IMR-90 (cell line): ENCODE measurements at regions of chr18 and their contacts with region 1.

Region 1: DNA sequence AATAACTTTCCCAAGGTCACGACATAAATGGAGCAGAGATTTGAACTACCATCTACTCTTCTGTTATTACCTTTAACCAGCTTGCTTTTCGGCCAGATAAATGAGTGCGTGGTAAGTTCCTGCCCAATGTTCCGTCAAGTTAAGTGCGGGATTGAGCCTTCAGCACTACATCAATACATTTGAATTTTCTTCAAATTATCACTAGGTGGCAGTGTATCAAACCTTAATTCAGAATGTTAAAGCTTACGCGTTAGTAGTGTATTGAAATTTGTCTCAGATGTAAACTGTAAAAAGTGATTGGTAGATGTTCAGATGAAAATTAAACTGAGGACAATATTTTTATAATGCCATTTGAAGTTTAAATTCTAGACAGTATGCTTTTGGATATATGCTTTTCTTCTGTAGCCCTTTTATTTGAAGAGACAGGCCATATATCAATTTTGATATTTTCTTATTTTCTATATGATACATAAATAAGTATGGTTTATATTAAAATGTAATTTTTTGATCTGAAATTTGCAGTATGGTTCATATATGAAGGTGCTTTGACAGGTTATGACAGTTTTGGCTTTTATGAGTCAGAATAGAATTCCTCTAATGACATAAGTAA is 681.3 kb downstream of the ADCYAP1 start:
- DNase-seq: peak; percentile 3
- ATAC-seq: no peak
- H3K4me3 ChIP-seq: no peak overlapping the region
- H3K27ac ChIP-seq: no peak overlapping the region
- H3K4me1 ChIP-seq: no peaks in the 10 kb centered on the region
- H3K27me3 ChIP-seq: no peaks in the 10 kb centered on the region
- CTCF ChIP-seq: peak; percentile 34
- POLR2A ChIP-seq: no peak
- RAD21 ChIP-seq: 0 out of 2 replicates have a peak, but pooled peaks have one; percentile 20

Region 2: DNA sequence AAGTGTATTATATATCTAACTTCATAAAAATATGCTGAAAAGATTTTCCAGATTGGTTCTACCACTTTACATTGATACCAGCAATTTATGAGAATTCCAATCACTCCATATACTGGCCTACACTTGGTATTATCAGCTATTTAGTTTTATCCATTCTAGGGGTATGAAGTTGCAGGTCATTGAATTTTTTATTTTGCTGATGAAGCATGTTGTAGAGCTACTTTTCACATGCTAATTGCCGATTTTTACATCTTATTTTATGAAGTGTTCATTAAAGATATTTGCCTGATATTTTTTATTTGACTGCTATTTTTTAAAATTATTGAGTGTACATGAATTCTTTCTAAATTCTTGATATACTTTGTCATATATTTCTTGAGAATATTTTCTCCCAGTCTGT is 139.2 kb before region 1 on chr18:
- CTCF ChIA-PET with region 1: no interaction called
- POLR2A ChIA-PET with region 1: no interaction called
- dilution Hi-C with region 1: no loop called
- in situ Hi-C with region 1: no loop called
- intact Hi-C with region 1: no loop called
- DNase-seq: no peak
- ATAC-seq: no peak
- H3K4me3 ChIP-seq: no peak overlapping the region
- H3K27ac ChIP-seq: no peak overlapping the region
- H3K4me1 ChIP-seq: no peaks in the 10 kb centered on the region
- H3K27me3 ChIP-seq: no peaks in the 10 kb centered on the region
- CTCF ChIP-seq: no peak
- POLR2A ChIP-seq: no peak
- RAD21 ChIP-seq: no peak

Region 3: DNA sequence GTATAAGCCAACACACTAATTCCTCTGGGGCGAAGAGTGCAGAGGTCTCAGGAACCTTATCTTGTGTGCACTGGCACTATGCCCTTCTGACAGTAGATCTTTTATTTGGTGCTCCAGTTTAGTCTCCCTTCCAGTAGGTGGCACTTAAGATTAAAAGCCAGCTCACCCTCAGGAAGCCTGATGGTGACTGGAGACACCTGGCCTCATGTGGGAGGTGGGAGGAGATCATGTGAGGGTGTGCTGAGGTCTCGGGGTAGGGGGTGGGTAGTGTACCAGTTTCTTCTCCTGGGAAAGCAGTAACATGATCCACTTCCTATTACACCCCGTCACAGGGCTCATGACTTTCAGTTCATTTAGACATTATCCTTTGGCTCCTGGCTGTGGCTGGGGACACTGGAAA is 26.4 kb before region 1 on chr18:
- CTCF ChIA-PET with region 1: no interaction called
- POLR2A ChIA-PET with region 1: no interaction called
- dilution Hi-C with region 1: no loop called
- in situ Hi-C with region 1: no loop called
- intact Hi-C with region 1: loop called (anchors 1 kb)
- DNase-seq: no peak
- ATAC-seq: no peak
- H3K4me3 ChIP-seq: no peak overlapping the region
- H3K27ac ChIP-seq: no peak overlapping the region
- H3K4me1 ChIP-seq: no peaks in the 10 kb centered on the region
- H3K27me3 ChIP-seq: no peaks in the 10 kb centered on the region
- CTCF ChIP-seq: no peak
- POLR2A ChIP-seq: no peak
- RAD21 ChIP-seq: no peak

Region 4: DNA sequence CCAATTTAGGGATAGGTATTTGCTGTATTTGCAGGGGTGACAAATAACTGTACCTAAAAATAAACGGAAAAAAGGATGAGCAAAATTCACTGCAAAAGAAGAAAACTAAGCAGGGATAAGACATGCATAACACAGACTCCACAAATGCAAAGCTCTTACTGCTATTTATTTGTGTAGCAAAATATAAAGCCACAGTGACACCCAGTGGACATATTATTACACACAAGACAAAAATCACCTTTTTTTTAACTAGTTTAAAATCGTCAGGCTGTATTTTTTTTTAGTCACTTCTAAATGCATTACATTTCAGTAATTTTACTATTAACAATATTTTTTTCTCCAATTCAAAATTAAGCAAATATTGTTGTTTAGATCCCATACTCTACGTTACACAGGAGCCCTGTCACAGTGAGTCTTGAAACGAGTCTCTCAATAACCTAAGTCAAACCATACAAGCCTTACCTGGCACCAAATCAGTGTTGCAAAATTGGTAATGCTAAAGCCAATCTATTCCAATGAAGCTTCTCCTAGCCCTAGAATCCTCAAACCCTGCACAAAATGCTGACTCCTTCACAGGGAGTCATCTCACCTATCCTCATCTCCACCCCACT is 961.6 kb after region 1 on chr18:
- CTCF ChIA-PET with region 1: interaction called, 7 read pairs
- POLR2A ChIA-PET with region 1: no interaction called
- dilution Hi-C with region 1: no loop called
- in situ Hi-C with region 1: loop called (anchors 25 kb)
- intact Hi-C with region 1: loop called (anchors 1 kb)
- DNase-seq: peak; percentile 71
- ATAC-seq: peak; percentile 89
- H3K4me3 ChIP-seq: no peak overlapping the region
- H3K27ac ChIP-seq: no peak overlapping the region
- H3K4me1 ChIP-seq: no peaks in the 10 kb centered on the region
- H3K27me3 ChIP-seq: no peaks in the 10 kb centered on the region
- CTCF ChIP-seq: peak; percentile 66
- POLR2A ChIP-seq: no peak
- RAD21 ChIP-seq: peak; percentile 64